OCI-LY7 (cell line): ENCODE measurements at regions of chr12 and their contacts with region 1.

Region 1: DNA sequence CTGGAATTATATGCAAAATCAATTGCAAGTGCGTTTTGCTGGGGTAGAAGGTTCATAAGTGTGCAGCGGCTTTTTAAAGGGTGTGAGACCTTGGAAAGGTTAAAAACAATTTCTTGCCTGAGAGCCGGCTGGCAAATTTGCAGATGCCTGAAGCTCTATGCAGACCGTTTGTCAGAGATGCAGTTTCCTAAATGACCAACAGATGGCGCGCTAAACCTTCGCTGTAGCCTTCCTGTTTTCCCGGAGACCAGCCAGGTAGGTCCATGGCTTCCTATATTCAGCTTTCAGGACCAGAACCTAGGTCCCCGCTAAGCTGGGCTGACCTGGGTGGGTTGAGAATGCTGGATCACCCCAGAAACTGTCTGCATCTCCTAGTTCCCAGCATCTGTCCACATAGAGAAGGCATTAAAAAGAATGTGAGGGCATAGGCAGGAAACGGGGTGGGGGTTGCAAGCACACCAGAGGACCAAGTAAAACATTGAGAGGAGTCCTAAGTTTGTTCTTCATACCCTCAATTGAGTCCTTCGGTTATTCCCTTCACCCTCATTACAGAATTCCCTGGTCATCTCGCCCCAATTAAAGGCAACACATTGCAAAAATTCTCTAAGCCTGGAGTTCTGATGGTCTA is 5.7 kb upstream of the NOS1 start:
- DNase-seq: peak; percentile 68
- H3K4me3 ChIP-seq: no peak overlapping the region
- H3K27ac ChIP-seq: no peak overlapping the region
- H3K4me1 ChIP-seq: no peaks in the 10 kb centered on the region
- CTCF ChIP-seq: peak; percentile 95

Region 2: DNA sequence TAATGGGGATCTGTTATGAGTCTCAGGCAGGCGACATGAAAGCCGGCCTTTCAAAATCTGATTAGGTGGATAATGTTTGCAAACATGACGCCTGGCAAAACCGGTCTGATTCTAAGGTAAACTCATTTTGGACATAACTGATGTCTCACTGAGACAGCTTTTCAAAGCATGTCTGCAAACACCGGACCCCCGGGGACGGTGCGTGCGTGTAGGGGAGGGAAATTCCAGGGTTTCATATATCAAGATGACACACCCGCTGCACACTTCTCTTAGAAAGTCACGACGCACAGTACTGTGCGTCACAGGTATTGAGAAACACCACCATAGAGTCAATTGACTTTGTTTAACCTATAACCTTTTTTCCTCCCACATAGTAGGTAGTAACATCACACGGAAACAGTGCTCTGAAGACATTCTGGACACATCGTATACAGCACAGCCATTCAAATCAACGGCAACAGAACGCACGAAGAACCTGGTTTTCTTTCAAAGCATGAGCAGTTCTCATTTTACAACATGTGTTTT is 224.1 kb before region 1 on chr12:
- CTCF ChIA-PET with region 1: no interaction called
- POLR2A ChIA-PET with region 1: no interaction called
- intact Hi-C with region 1: no loop called
- DNase-seq: no peak
- H3K4me3 ChIP-seq: no peak overlapping the region
- H3K27ac ChIP-seq: no peak overlapping the region
- H3K4me1 ChIP-seq: no peaks in the 10 kb centered on the region
- CTCF ChIP-seq: no peak

Region 3: DNA sequence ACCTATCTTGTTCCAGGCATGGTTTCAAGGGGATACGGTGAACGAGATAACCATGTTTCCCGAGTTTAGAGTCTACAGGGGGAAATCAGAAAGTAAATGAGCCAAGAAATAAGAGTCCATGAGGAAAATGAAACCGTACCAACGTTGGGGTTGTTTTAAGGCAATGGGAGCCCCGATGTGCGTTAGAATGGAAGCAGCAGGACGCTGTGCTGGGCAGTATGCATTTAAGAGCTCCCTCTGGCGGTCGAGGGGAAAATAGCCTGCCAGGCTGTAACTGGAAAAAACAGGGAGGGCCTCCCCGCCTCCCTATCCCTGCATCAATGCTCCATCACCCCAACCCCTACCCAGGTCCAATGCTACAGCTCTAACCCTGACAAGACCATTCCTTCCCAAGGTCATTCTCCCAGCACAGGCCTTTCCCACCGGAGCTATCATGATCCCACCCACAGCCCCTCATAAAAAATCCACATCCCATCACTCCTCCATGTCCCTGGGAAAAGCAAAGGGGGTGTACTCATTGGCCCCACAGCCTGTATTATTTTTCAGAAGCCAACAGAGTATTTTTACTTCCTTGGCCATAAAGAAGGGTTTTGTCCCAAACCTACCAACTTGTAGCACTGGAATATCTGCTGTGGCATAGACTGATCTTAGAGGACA is 220.6 kb after region 1 on chr12:
- CTCF ChIA-PET with region 1: interaction called, 3 read pairs
- POLR2A ChIA-PET with region 1: no interaction called
- intact Hi-C with region 1: loop called (anchors 5 kb)
- DNase-seq: peak; percentile 50
- H3K4me3 ChIP-seq: no peak overlapping the region
- H3K27ac ChIP-seq: no peak overlapping the region
- H3K4me1 ChIP-seq: no peaks in the 10 kb centered on the region
- CTCF ChIP-seq: peak; percentile 86

Region 4: GRCh38 chr12:117836999-117837736 is 470.0 kb after region 1 on chr12:
- CTCF ChIA-PET with region 1: interaction called, 3 read pairs
- POLR2A ChIA-PET with region 1: no interaction called
- intact Hi-C with region 1: loop called (anchors 1 kb)
- DNase-seq: peak; percentile 66
- H3K4me3 ChIP-seq: no peak overlapping the region
- H3K27ac ChIP-seq: no peak overlapping the region
- H3K4me1 ChIP-seq: no peaks in the 10 kb centered on the region
- CTCF ChIP-seq: peak; percentile 97